OCI-LY7 (cell line): ENCODE measurements at regions of chr19 and their contacts with region 1.

Region 1: DNA sequence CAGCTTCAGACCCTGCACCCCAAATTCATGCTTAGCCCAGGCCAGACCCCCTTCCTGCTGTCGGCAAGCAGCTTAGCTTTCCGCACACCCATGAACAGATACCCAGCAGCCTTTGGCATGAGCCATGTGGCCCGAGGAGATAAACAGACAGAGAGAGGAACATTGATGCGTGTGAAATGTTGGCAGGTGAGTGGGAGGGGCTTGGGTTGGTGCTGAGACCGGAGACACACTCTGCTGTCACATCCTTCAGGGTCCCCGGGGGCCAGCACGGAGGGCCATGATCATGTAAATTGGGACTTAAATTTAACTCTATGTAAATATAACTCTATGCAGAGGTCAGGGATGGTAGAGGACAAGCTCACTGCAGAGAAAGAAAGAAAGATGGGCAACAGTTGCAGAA is 1.5 kb downstream of the CD22 start:
- DNase-seq: peak; percentile 97
- H3K4me3 ChIP-seq: peak overlapping the region; percentile 88
- H3K27ac ChIP-seq: peak overlapping the region; percentile 88
- H3K4me1 ChIP-seq: peaks cover 82% of the 10 kb centered on the region
- CTCF ChIP-seq: no peak

Region 2: DNA sequence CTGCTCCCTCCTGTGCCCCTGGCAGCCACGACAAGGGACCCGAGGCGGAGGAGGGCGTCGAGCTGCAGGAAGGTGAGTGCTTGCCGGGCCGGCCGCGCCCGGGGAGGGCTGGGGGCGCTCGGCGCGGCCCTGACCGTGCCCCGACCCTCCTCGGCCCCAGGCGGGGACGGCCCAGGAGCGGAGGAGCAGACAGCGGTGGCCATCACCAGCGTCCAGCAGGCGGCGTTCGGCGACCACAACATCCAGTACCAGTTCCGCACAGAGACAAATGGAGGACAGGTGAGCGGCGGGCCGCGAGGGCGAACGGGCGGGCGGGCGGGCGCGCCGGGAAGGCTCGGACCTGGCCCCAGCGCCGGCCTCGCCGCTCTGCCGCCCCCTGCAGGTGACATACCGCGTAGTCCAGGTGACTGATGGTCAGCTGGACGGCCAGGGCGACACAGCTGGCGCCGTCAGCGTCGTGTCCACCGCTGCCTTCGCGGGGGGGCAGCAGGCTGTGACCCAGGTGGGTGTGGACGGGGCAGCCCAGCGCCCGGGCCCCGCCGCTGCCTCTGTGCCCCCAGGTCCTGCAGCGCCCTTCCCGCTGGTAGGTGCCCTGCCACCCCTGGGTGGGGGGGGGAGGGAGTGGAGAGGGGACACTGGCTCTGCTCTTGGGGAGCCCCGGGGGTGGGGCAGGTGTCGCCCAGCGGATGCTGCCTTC is 60.9 kb before region 1 on chr19:
- CTCF ChIA-PET with region 1: no interaction called
- POLR2A ChIA-PET with region 1: interaction called, 3 read pairs
- intact Hi-C with region 1: loop called (anchors 2 kb)
- DNase-seq: peak; percentile 90
- H3K4me3 ChIP-seq: peak overlapping the region; percentile 75
- H3K27ac ChIP-seq: peak overlapping the region; percentile 61
- H3K4me1 ChIP-seq: peaks cover 43% of the 10 kb centered on the region
- CTCF ChIP-seq: peak; percentile 73

Region 3: GRCh38 chr19:35306473-35307246 is 23.8 kb before region 1 on chr19:
- CTCF ChIA-PET with region 1: no interaction called
- POLR2A ChIA-PET with region 1: interaction called, 5 read pairs
- intact Hi-C with region 1: loop called (anchors 1 kb)
- DNase-seq: peak; percentile 75
- H3K4me3 ChIP-seq: no peak overlapping the region
- H3K27ac ChIP-seq: peak overlapping the region; percentile 26
- H3K4me1 ChIP-seq: peaks cover 72% of the 10 kb centered on the region
- CTCF ChIP-seq: peak; percentile 85

Region 4: GRCh38 chr19:35318650-35319448 is 11.6 kb before region 1 on chr19:
- CTCF ChIA-PET with region 1: interaction called, 5 read pairs
- POLR2A ChIA-PET with region 1: interaction called, 16 read pairs
- intact Hi-C with region 1: loop called (anchors 1 kb)
- DNase-seq: no peak
- H3K4me3 ChIP-seq: peak overlapping the region; percentile 1
- H3K27ac ChIP-seq: peak overlapping the region; percentile 88
- H3K4me1 ChIP-seq: peaks cover 86% of the 10 kb centered on the region
- CTCF ChIP-seq: no peak

Region 5: GRCh38 chr19:35468637-35469036 is 138.2 kb after region 1 on chr19:
- CTCF ChIA-PET with region 1: no interaction called
- POLR2A ChIA-PET with region 1: no interaction called
- intact Hi-C with region 1: no loop called
- DNase-seq: peak; percentile 76
- H3K4me3 ChIP-seq: no peak overlapping the region
- H3K27ac ChIP-seq: no peak overlapping the region
- H3K4me1 ChIP-seq: peaks cover 2% of the 10 kb centered on the region
- CTCF ChIP-seq: peak; percentile 81